Prostate gland (tissue), 2 donors: ENCODE measurements at regions of chr12 and their contacts with region 1.

Region 1: DNA sequence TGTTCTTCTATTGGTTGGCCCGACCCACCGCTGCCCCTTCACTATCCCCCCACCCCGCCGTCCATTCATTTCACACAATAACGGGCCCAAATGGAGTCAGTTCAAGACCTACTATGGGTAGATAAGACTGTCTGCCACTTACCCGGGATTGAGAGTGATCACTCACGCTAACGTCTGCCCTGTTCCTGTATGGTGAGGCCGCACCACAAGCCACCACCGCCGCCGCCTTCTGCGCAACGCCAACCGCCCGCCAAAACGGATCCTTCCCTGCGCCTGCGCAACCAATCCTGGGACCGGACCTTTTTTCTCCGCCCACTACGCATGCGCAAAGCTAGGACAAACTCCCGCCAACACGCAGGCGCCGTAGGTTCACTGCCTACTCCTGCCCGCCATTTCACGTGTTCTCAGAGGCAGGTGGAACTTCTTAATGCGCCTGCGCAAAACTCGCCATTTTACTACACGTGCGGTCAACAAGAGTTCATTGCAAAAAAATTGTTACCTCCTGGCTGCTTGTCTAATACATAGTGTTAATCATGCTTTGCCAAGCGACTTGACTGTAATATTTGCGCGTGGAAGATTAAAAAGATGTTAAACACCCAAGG is at the start of gene CBX5:
- DNase-seq: peak; percentile 98
- H3K4me3 ChIP-seq: peak within 1 kb of the TSS; percentile 72 to 77
- H3K27ac ChIP-seq: peak within 1 kb of the TSS; percentile 92 to 93
- H3K4me1 ChIP-seq: peaks cover 9% of the 10 kb centered on the region
- H3K27me3 ChIP-seq: no peaks in the 10 kb centered on the region
- CTCF ChIP-seq: peak in 1 of 4 experiments; percentile 1
- POLR2A ChIP-seq: peak; percentile 40
- total RNA-seq, gene CBX5: 49.9 to 52.8 TPM

Region 2: GRCh38 chr12:54140588-54141388 is 139.2 kb before region 1 on chr12:
- intact Hi-C with region 1: no loop called
- DNase-seq: no peak
- H3K4me3 ChIP-seq: no peak overlapping the region
- H3K27ac ChIP-seq: no peak overlapping the region
- H3K4me1 ChIP-seq: no peaks in the 10 kb centered on the region
- H3K27me3 ChIP-seq: no peaks in the 10 kb centered on the region
- CTCF ChIP-seq: no peak
- POLR2A ChIP-seq: no peak

Region 3: GRCh38 chr12:54246011-54246641 is 33.8 kb before region 1 on chr12:
- intact Hi-C with region 1: loop called (anchors 5 kb)
- DNase-seq: no peak
- H3K4me3 ChIP-seq: no peak overlapping the region
- H3K27ac ChIP-seq: no peak overlapping the region
- H3K4me1 ChIP-seq: no peaks in the 10 kb centered on the region
- H3K27me3 ChIP-seq: no peaks in the 10 kb centered on the region
- CTCF ChIP-seq: no peak
- POLR2A ChIP-seq: no peak

Region 4: DNA sequence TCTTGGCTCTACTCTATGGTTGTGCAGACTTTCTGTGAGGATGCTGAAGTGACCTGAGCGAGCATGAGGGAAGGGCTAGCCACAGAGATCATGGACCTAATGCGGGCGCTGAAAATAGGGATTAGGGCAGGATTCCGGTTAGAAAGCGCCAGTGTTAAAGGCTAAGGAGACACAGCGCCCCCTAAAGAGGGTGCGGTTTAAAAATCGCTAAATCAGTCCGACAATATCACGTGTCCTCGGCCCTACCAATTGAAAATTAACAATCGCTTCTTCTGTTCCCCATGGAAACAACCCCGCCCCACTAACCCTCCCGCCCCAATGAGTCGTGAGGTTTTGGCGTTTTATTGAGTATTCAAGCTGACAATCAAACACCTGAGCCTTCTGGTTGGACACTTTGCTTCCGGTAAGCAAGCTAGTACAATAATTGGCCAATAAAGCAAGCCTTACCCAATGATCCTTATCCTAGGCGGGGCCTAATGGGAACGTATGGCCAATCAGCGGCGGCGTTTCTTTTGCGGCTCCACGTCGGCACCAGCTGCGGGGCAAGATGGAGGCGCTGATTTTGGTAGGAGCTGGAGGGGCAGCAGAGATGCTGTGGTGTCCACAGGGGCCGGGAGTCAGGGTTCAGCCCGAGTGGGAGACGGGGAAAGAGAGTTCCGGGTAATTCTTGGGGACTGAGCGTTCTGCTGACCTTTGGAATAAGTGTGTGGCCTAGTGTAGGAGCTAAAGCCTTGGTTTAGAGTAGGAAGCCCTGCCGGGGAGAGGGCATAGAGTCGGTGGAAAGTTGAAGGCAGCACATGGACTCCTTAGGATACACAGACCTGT is 44.9 kb after region 1 on chr12 and contains the start of gene COPZ1:
- intact Hi-C with region 1: loop called (anchors 5 kb)
- DNase-seq: peak; percentile 97
- H3K4me3 ChIP-seq: peak within 1 kb of the TSS; percentile 70 to 72
- H3K27ac ChIP-seq: peak within 1 kb of the TSS; percentile 83 to 88
- H3K4me1 ChIP-seq: no peaks in the 10 kb centered on the region
- H3K27me3 ChIP-seq: no peaks in the 10 kb centered on the region
- CTCF ChIP-seq: peak; percentile 58 to 81 (median 71)
- POLR2A ChIP-seq: peak; percentile 80
- total RNA-seq, gene COPZ1: 83.1 to 192 TPM

Region 5: GRCh38 chr12:54359033-54359761 is 79.2 kb after region 1 on chr12:
- intact Hi-C with region 1: loop called (anchors 5 kb)
- DNase-seq: peak; percentile 96
- H3K4me3 ChIP-seq: peak overlapping the region; percentile 40 to 53
- H3K27ac ChIP-seq: peak overlapping the region; percentile 78 to 88
- H3K4me1 ChIP-seq: no peaks in the 10 kb centered on the region
- H3K27me3 ChIP-seq: no peaks in the 10 kb centered on the region
- CTCF ChIP-seq: peak in 2 of 4 experiments; percentile 3 to 9
- POLR2A ChIP-seq: peak; percentile 32